CD8-positive, alpha-beta T cell (primary cell): ENCODE measurements at regions of chr6 and their contacts with region 1.

Region 1: GRCh38 chr6:57221936-57222742 is at the start of gene RAB23:
- DNase-seq: peak; percentile 66 to 92 (median 81)
- ATAC-seq: peak; percentile 90
- H3K4me3 ChIP-seq: peak within 1 kb of the TSS; percentile 88 to 94
- H3K4me3 Mint-ChIP-seq: peak within 1 kb of the TSS; percentile 97
- H3K27ac ChIP-seq: peak within 1 kb of the TSS in 1 of 2 experiments; percentile 35
- H3K27ac Mint-ChIP-seq: peak within 1 kb of the TSS; percentile 72
- H3K4me1 ChIP-seq: peaks cover 4% of the 10 kb centered on the region
- H3K4me1 Mint-ChIP-seq: peaks cover 11% of the 10 kb centered on the region
- H3K27me3 ChIP-seq: peaks cover 5 to 9% of the 10 kb centered on the region in 2 experiments
- H3K27me3 Mint-ChIP-seq: peaks cover 20% of the 10 kb centered on the region
- CTCF ChIP-seq: no peak
- total RNA-seq, gene RAB23: 0.08 TPM

Region 2: DNA sequence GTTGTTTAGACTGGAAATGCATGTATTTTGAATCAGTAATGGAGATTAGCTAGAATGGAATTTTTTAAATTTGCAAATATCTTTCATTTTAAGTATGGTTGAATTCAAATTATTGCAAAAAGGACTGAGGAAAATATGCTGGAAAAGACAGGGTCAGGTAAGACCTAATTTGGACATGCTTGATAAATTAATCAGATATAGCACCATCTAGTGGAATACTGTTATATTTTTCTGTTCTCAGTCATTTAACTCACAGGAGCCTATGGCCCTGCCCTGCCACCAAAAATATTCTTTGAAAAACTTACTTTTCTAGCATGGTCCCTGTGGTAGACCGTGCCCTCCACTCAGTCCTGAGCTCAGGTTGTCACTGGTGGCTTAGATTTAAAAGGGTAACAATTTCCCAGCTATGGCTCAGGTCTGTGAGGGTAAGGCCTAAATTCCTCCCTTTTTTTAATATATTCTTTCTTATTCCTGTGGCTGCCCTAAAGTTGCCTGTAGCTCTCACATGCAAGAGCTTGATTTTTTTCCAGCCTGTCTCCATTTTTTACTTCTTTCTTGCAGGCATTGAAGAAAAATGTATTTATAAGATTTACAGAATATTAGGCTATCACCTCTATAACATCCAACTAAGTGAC is 200.9 kb before region 1 on chr6:
- CTCF ChIA-PET with region 1: no interaction called
- POLR2A ChIA-PET with region 1: no interaction called
- intact Hi-C with region 1: no loop called
- DNase-seq: peak in 2 of 9 experiments; percentile 22 to 42
- ATAC-seq: peak; percentile 31
- H3K4me3 ChIP-seq: no peak overlapping the region
- H3K4me3 Mint-ChIP-seq: no peak overlapping the region
- H3K27ac ChIP-seq: no peak overlapping the region
- H3K27ac Mint-ChIP-seq: no peak overlapping the region
- H3K4me1 ChIP-seq: no peaks in the 10 kb centered on the region
- H3K4me1 Mint-ChIP-seq: no peaks in the 10 kb centered on the region
- H3K27me3 ChIP-seq: no peaks in the 10 kb centered on the region
- H3K27me3 Mint-ChIP-seq: no peaks in the 10 kb centered on the region
- CTCF ChIP-seq: peak; percentile 69

Region 3: GRCh38 chr6:57172136-57173055 is 49.7 kb before region 1 on chr6 and contains the start of gene BAG2:
- CTCF ChIA-PET with region 1: interaction called, 3 read pairs
- POLR2A ChIA-PET with region 1: interaction called, 4 read pairs
- intact Hi-C with region 1: loop called (anchors 1 to 2 kb)
- DNase-seq: peak; percentile 79 to 91 (median 89)
- ATAC-seq: peak; percentile 85
- H3K4me3 ChIP-seq: peak within 1 kb of the TSS; percentile 62 to 77
- H3K4me3 Mint-ChIP-seq: peak within 1 kb of the TSS; percentile 87
- H3K27ac ChIP-seq: peak within 1 kb of the TSS; percentile 62 to 83
- H3K27ac Mint-ChIP-seq: peak within 1 kb of the TSS; percentile 92
- H3K4me1 ChIP-seq: peaks cover 23% of the 10 kb centered on the region
- H3K4me1 Mint-ChIP-seq: peaks cover 47% of the 10 kb centered on the region
- H3K27me3 ChIP-seq: no peaks in the 10 kb centered on the region
- H3K27me3 Mint-ChIP-seq: no peaks in the 10 kb centered on the region
- CTCF ChIP-seq: no peak
- total RNA-seq, gene BAG2: 4.6 to 5.0 TPM